OCI-LY7 (cell line): ENCODE measurements at regions of chr12 and their contacts with region 1.

Region 1: GRCh38 chr12:45990468-45991283 is at the start of gene SCAF11:
- DNase-seq: peak; percentile 99
- H3K4me3 ChIP-seq: peak within 1 kb of the TSS; percentile 78
- H3K27ac ChIP-seq: peak within 1 kb of the TSS; percentile 92
- H3K4me1 ChIP-seq: peaks cover 37% of the 10 kb centered on the region
- CTCF ChIP-seq: peak; percentile 85
- total RNA-seq, gene SCAF11: 115 and 130 TPM in 2 replicates

Region 2: DNA sequence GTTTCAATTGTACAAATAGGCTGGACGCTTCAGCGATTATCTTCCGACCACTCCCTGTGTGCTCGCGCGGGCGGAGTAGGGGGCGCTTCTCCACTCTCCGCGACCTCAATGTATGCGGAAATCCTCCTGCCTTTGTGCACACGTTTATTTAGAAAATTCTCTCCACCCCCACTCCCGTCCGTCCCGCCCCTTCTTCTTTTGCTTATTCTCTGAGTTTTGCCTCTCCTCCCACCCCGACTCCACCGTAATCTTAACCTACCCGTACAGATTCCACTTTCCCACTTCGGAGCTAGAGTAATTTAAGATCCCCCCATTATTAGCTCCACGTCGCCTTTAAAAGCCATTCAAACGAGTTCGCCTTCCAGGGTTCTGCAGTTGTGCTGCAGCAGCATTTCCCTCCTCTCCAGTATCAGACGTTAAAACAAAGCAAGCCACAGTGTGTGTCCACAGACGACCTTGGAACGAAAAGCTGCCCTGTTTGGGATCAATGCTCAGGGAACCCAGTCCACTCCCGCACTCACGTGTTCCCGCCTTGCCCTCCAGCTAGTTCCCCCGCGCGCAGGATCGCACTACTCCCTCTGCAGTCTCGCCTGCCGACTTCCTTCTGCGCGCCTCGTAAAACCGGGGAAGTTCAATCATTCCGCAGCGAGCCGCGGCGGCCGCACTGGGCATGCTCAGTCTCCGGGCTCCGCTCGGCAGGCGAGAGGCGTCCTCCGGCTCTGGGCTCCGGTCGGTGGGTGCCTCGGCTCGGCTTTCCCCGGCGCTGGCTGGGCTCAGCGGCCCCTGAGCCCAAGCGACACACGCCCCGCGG is 775.1 kb before region 1 on chr12 and contains the start of gene ANO6:
- CTCF ChIA-PET with region 1: no interaction called
- POLR2A ChIA-PET with region 1: no interaction called
- intact Hi-C with region 1: loop called (anchors 1 kb)
- DNase-seq: peak; percentile 89
- H3K4me3 ChIP-seq: peak within 1 kb of the TSS; percentile 90
- H3K27ac ChIP-seq: peak within 1 kb of the TSS; percentile 90
- H3K4me1 ChIP-seq: peaks cover 19% of the 10 kb centered on the region
- CTCF ChIP-seq: peak; percentile 71
- total RNA-seq, gene ANO6: 11.9 and 15.0 TPM in 2 replicates

Region 3: DNA sequence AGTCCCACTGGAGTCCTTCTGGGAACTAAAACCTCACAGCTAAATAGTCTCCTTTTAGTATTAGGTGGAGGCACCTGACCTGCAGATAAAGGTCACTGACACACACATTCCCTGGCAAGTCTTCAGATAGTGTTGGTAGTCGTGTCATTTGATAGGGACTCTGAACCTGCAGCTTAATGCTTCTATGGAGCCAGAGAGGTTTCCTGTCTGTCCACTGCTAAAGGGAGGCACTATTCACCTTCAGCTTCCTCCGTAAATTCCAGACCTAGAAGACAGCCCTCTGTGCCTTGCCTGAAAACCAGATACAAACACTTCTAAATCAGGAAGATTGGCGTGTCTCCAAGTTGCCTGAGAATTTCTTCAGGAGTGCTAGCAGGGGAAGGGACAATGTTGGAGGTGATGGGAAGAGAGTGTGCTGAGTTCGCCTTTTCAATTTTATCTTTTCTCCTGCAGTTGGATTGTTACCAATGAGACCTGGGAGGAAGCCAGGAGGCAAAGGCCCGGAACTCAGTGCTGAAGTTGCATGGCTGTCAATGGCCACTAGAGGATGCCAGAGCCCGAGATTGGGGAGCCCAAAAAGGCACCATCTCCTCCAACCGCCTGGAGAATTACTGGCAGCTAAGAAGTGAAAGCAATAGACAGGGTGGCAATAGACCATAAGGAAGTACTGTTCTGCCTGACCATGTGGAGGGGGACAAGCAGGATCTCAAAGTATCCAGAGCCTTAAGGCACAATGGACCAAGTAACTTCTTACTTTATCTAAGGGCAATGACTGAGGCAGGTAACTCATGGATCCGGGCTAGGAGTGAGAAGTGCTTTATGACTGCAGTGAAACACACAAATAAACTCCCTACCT is 81.3 kb after region 1 on chr12:
- CTCF ChIA-PET with region 1: no interaction called
- POLR2A ChIA-PET with region 1: no interaction called
- intact Hi-C with region 1: loop called (anchors 1 kb)
- DNase-seq: peak; percentile 84
- H3K4me3 ChIP-seq: no peak overlapping the region
- H3K27ac ChIP-seq: no peak overlapping the region
- H3K4me1 ChIP-seq: peaks cover 5% of the 10 kb centered on the region
- CTCF ChIP-seq: peak; percentile 98

Region 4: GRCh38 chr12:46153268-46153872 is 162.7 kb after region 1 on chr12:
- CTCF ChIA-PET with region 1: no interaction called
- POLR2A ChIA-PET with region 1: no interaction called
- intact Hi-C with region 1: loop called (anchors 1 kb)
- DNase-seq: peak; percentile 55
- H3K4me3 ChIP-seq: no peak overlapping the region
- H3K27ac ChIP-seq: no peak overlapping the region
- H3K4me1 ChIP-seq: peaks cover 11% of the 10 kb centered on the region
- CTCF ChIP-seq: peak; percentile 95

Region 5: GRCh38 chr12:46372544-46373110 is 382.0 kb after region 1 on chr12 and contains the start of gene SLC38A2:
- CTCF ChIA-PET with region 1: no interaction called
- POLR2A ChIA-PET with region 1: interaction called, 5 read pairs
- intact Hi-C with region 1: loop called (anchors 5 kb)
- DNase-seq: peak; percentile 93
- H3K4me3 ChIP-seq: peak within 1 kb of the TSS; percentile 95
- H3K27ac ChIP-seq: peak within 1 kb of the TSS; percentile 77
- H3K4me1 ChIP-seq: peaks cover 24% of the 10 kb centered on the region
- CTCF ChIP-seq: no peak
- total RNA-seq, gene SLC38A2: 66.2 and 70.5 TPM in 2 replicates

Region 6: DNA sequence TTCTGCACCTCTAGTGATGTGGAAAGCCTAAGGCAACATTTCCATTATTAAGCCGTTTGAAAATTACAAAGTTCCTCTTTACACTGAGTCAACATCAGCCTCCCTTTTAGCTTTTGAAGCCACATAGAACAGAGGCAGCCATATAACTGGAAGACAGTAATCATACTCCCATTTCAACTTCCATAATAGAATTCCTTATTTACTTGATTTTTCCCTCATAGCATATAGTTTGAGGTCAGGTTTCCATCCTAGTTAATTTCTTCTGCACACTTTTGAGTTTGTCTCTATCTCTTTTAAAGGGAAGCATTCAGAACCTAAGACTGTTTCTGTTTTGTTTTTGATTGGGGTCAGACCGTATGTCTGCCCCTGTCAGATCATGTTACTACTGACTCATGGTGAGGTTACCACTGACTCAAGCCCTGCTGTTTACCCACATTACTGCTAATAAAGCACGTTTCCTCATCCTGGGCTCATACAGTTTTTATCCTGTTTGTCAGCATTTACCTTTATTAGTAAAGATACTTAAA is 674.1 kb after region 1 on chr12:
- CTCF ChIA-PET with region 1: no interaction called
- POLR2A ChIA-PET with region 1: no interaction called
- intact Hi-C with region 1: no loop called
- DNase-seq: no peak
- H3K4me3 ChIP-seq: no peak overlapping the region
- H3K27ac ChIP-seq: no peak overlapping the region
- H3K4me1 ChIP-seq: no peaks in the 10 kb centered on the region
- CTCF ChIP-seq: no peak

Region 7: GRCh38 chr12:47652521-47653234 is 1662.0 kb after region 1 on chr12:
- CTCF ChIA-PET with region 1: no interaction called
- POLR2A ChIA-PET with region 1: no interaction called
- intact Hi-C with region 1: no loop called
- DNase-seq: peak; percentile 22
- H3K4me3 ChIP-seq: no peak overlapping the region
- H3K27ac ChIP-seq: no peak overlapping the region
- H3K4me1 ChIP-seq: peaks cover 12% of the 10 kb centered on the region
- CTCF ChIP-seq: no peak